Activated CD4-positive, alpha-beta T cell treated with anti-CD3 and anti-CD28 coated beads for 36 hours (primary cell): ENCODE measurements at regions of chr20 and their contacts with region 1.

Region 1: GRCh38 chr20:3173610-3174441 is 477 bp upstream of the LZTS3 start:
- DNase-seq: peak; percentile 94
- ATAC-seq: peak; percentile 40
- H3K4me3 Mint-ChIP-seq: peak overlapping the region; percentile 77
- H3K27ac Mint-ChIP-seq: peak overlapping the region; percentile 55
- H3K4me1 Mint-ChIP-seq: peaks cover 10% of the 10 kb centered on the region
- H3K27me3 Mint-ChIP-seq: peaks cover 19% of the 10 kb centered on the region

Region 2: DNA sequence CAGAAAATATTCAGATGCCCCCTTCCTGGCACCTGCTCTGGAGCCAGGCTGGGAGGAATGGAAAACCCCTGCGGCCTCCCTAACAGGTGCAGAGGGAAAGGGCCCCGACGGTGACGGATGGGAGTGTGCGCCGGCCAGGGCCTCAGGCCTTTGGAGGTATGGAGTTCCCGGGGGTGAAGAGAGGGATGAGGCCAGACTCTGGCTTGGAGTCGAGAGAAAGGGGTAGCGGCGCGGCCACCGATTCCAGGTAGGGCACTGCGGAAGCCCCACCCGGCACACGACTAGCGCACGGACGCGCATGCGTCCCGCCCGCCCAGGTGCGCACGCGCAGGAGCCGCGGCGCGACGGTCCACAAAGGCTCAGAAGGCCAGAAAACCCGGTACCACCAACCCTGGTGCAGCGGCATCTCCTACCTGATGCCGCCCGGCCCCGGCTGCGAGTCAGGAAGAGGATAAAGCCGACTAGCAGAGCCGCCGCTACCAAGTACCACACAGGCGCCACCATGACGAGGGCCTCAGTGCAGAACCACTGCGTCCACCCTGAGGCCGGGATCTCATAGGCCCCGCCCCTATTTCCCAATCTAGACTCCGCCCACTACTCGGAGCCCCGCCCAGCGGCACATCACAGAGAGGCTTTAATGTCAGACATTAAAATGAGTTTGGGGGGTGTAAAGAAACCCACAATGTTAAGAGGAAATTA is 30.4 kb after region 1 on chr20 and contains the start of gene DDRGK1:
- CTCF ChIA-PET with region 1: interaction called, 3 read pairs
- POLR2A ChIA-PET with region 1: no interaction called
- intact Hi-C with region 1: loop called in 1 of 2 experiments (anchors 1 kb)
- DNase-seq: peak; percentile 94
- ATAC-seq: peak; percentile 91
- H3K4me3 Mint-ChIP-seq: peak within 1 kb of the TSS; percentile 92
- H3K27ac Mint-ChIP-seq: peak within 1 kb of the TSS; percentile 98
- H3K4me1 Mint-ChIP-seq: peaks cover 12% of the 10 kb centered on the region
- H3K27me3 Mint-ChIP-seq: no peaks in the 10 kb centered on the region
- total RNA-seq, gene DDRGK1: 49.3 to 52.2 TPM

Region 3: DNA sequence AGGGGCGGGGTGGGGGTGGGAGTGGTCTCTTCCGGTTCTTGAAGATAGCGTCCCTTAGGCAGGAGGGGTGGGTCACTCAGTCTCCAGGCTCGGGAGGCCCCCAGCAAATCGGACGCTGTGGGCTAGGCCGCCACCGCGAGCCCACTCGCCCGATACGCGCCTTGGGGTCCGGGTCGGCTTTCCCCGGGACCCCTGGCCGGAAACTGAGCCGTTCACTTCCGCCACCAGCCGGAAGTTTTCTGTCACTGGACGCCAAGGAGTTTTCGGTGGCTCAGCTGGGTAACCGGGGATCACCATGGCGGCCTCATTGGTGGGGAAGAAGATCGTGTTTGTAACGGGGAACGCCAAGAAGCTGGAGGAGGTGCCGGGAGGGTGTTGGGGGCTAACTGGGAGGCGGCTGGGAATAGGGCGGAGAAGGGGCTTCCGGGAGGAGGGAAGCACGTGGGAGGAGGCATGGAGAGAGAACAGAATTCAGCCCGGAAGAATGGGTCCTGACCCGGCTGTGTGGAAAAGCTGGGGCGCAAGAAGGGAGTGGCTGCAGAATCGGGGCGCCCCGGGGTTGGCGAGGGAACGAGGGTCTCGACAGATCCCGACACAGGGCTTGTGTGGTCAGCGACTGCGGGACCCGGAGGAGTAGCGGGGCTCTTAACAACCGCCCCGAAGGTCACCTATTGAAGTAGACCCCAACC is 35.6 kb after region 1 on chr20 and contains the start of gene ITPA:
- CTCF ChIA-PET with region 1: interaction called, 3 read pairs
- POLR2A ChIA-PET with region 1: no interaction called
- intact Hi-C with region 1: loop called in 1 of 2 experiments (anchors 1 kb)
- DNase-seq: peak; percentile 78
- ATAC-seq: peak; percentile 43
- H3K4me3 Mint-ChIP-seq: peak within 1 kb of the TSS; percentile 90
- H3K27ac Mint-ChIP-seq: peak within 1 kb of the TSS; percentile 92
- H3K4me1 Mint-ChIP-seq: peaks cover 13% of the 10 kb centered on the region
- H3K27me3 Mint-ChIP-seq: no peaks in the 10 kb centered on the region
- total RNA-seq, gene ITPA: 32.7 to 67.5 TPM

Region 4: DNA sequence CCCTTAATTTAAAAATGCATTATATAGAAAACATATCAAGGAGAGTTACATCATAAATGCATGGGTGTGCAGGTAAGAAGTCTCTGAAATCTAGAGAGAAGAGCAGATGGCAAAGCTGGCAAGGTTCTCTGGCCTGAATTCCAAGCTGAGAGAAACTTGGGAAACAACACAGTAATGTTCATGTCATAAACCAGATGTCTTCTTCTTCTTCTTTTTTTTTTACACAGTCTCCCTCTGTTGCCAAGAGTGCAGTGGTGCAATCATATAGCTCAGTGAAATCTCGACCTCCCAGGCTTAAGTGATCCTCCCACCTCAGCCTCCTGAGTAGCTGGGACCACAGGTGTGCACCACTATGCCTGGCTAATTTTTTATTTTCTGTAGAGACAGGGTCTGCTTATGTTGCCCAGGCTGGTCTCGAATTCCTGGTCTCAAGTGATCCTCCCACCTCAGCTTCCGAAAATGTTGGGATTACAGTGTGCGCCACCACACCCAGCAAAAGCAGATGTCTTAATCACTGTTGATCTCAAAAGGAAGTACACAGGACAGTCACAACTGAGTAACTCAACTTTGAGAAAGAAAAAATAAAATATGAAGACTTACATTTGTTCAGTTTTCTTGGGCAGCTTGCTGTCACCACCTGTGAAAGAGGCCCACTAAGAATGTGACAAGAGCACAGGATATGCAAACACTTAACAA is 156.4 kb after region 1 on chr20:
- CTCF ChIA-PET with region 1: no interaction called
- POLR2A ChIA-PET with region 1: no interaction called
- intact Hi-C with region 1: no loop called
- DNase-seq: no peak
- ATAC-seq: no peak
- H3K4me3 Mint-ChIP-seq: no peak overlapping the region
- H3K27ac Mint-ChIP-seq: no peak overlapping the region
- H3K4me1 Mint-ChIP-seq: peaks cover 12% of the 10 kb centered on the region
- H3K27me3 Mint-ChIP-seq: no peaks in the 10 kb centered on the region

Region 5: GRCh38 chr20:4406627-4407026 is 1232.8 kb after region 1 on chr20:
- CTCF ChIA-PET with region 1: no interaction called
- POLR2A ChIA-PET with region 1: no interaction called
- intact Hi-C with region 1: no loop called
- DNase-seq: no peak
- ATAC-seq: no peak
- H3K4me3 Mint-ChIP-seq: no peak overlapping the region
- H3K27ac Mint-ChIP-seq: no peak overlapping the region
- H3K4me1 Mint-ChIP-seq: no peaks in the 10 kb centered on the region
- H3K27me3 Mint-ChIP-seq: peaks cover 11% of the 10 kb centered on the region